ENCODE measurements at regions of chr19 and their contacts with region 1.

Region 1: GRCh38 chr19:46661020-46661731 is at the start of gene DACT3:
- H3K4me3 ChIP-seq: peak within 1 kb of the TSS; percentile 45
- H3K27ac ChIP-seq: peak within 1 kb of the TSS; percentile 27; the same call in 1 of the 2 replicates
- H3K4me1 ChIP-seq: peaks cover 21% of the 10 kb centered on the region
- CTCF ChIP-seq: no peak

Region 2: GRCh38 chr19:46537136-46538097 is 123.8 kb before region 1 on chr19:
- CTCF ChIA-PET with region 1: interaction called, 10 read pairs
- POLR2A ChIA-PET with region 1: interaction called, 3 read pairs
- H3K4me3 ChIP-seq: no peak overlapping the region
- H3K27ac ChIP-seq: no peak overlapping the region
- H3K4me1 ChIP-seq: no peaks in the 10 kb centered on the region
- CTCF ChIP-seq: peak; percentile 62

Region 3: GRCh38 chr19:46586303-46587001 is 74.7 kb before region 1 on chr19:
- CTCF ChIA-PET with region 1: no interaction called
- POLR2A ChIA-PET with region 1: no interaction called
- H3K4me3 ChIP-seq: no peak overlapping the region
- H3K27ac ChIP-seq: no peak overlapping the region
- H3K4me1 ChIP-seq: no peaks in the 10 kb centered on the region
- CTCF ChIP-seq: no peak

Region 4: DNA sequence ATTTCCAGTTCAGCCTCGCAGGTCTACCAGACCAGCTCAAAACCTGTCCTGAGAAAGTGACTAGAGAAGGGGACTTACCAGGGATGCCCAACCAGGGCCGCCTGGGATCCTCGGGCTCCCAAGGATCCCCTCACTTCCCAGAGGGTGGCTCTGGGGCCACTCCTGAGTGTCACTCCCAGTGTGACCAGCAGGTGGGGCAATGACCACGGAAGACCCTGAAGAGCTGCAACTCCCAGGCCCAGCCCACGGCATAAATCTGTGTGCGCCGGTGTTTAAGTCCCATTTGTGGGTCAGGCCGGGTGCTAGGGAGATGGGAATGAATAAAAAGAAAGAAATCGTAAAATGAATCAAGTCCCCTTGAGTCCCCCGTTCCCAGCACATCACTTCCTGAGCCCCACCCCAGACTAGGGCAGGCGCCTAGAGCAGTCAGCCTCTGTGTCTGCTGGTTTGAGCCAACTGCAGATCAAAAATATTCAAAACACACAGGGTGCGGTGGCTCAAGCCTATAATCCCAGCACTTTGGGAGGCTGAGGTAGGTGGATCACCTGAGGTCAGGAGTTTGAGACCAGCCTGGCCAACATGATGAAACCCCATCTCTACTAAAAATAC is 47.0 kb before region 1 on chr19:
- CTCF ChIA-PET with region 1: interaction called, 327 read pairs
- POLR2A ChIA-PET with region 1: interaction called, 14 read pairs
- H3K4me3 ChIP-seq: no peak overlapping the region
- H3K27ac ChIP-seq: no peak overlapping the region
- H3K4me1 ChIP-seq: no peaks in the 10 kb centered on the region
- CTCF ChIP-seq: peak; percentile 80

Region 5: DNA sequence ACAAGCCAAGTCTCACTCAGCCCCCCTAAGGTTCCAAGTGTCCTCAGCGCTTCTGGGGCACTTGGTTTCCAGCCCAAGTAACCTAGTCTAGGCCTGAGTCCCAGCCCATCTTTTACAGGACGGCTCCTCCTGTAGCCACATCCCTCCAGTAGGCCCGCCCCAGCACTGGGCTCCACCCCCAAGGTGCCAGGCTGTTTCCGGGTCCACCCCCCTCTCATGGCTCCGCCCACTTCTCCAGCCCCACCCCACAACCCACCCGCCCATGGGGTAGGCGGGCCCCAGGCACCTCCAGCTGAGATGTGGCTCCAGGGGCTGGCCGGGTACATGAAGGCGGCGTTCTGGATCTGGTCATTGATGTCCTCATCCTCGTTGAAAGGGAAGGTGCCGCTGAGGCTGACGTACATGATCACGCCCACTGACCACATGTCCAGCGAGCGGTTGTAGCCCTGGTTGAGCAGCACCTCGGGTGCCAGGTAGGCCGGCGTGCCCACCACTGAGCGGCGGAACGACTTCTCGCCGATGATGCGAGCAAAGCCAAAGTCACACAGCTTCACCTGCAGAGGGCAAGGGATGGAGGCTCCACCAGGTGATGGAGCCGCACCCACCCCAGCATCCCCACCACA is 17.0 kb after region 1 on chr19:
- CTCF ChIA-PET with region 1: interaction called, 30 read pairs
- POLR2A ChIA-PET with region 1: interaction called, 11 read pairs
- H3K4me3 ChIP-seq: no peak overlapping the region
- H3K27ac ChIP-seq: no peak overlapping the region
- H3K4me1 ChIP-seq: no peaks in the 10 kb centered on the region
- CTCF ChIP-seq: no peak

Region 6: DNA sequence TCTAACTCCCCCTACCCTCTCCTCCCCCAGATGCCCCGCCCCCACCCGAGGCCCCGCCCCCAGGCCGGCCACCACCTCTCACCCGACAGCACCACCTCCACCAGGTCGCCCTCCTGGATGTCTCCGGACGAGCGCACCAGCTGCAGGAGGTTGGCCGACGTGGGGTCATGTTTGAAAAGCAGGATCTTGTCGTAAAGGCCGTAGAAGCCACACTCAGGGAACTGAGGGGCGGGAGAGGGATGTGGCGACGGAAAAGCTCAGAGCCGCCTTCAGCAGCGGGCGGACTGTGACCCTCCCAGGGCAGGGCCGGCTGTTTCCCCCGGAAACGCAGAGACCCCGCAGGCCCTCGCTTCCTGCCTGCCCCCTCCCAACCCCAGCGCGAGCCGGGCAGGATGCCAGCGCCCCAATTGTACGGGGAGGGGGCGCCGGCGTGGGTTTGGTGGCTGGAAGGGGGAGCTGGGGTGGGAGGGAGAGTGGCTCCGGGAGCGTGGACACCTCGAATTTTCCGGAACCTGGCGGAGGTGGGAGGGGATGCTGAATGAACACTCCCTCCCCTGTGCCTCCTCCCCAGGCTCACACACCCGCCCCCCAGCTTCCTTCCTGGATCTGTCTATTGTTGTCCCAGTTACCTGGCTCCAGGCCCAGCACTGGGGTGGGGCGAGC is 52.7 kb after region 1 on chr19:
- CTCF ChIA-PET with region 1: interaction called, 11 read pairs
- POLR2A ChIA-PET with region 1: interaction called, 4 read pairs
- H3K4me3 ChIP-seq: peak overlapping the region; percentile 40
- H3K27ac ChIP-seq: no peak overlapping the region
- H3K4me1 ChIP-seq: peaks cover 15% of the 10 kb centered on the region
- CTCF ChIP-seq: no peak